Activated CD4-positive, alpha-beta T cell treated with anti-CD3 and anti-CD28 coated beads for 36 hours (primary cell): ENCODE measurements at regions of chr11 and their contacts with region 1.

Region 1: GRCh38 chr11:113773416-113774173 is at the start of gene ZW10:
- DNase-seq: peak; percentile 96
- ATAC-seq: peak; percentile 99
- H3K4me3 Mint-ChIP-seq: peak within 1 kb of the TSS; percentile 98
- H3K27ac Mint-ChIP-seq: peak within 1 kb of the TSS; percentile 96
- H3K4me1 Mint-ChIP-seq: peaks cover 18% of the 10 kb centered on the region
- H3K27me3 Mint-ChIP-seq: no peaks in the 10 kb centered on the region
- total RNA-seq, gene ZW10: 16.9 to 18.5 TPM

Region 2: DNA sequence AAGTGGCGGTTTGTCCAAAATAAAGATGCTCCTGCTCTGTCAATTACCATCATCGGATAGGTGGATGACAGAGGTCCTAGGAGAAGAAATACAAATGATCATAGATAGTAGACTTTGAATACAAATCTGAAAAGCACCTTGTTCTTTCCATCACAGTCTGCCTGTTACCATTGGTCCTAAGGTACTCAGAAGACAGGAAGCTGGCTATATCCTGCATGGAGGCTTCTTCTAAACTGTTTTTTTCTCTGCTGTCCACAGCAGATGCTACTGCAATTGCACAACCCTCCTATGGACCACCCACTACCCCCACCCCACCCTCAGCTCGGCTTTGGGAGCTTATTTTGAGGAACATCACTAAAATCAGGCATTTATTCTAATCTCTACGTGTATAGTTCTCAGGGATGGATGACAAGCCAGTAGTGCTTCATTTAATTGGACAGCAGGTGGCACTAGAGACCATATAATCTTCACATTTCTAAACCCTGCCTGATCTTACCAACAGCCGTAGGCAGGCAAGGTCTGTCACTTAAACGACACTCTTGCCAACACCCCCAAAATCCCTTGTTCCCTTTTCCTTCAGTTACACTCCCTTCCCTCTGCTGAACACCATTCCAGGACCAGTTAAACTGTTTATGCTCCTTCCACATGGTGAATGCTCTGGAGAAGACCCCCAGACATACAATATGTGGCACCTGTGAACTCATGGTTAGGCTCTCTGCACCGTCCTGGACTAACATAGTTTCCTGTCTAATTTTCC is 1553.9 kb before region 1 on chr11:
- CTCF ChIA-PET with region 1: no interaction called
- POLR2A ChIA-PET with region 1: no interaction called
- intact Hi-C with region 1: loop called in 1 of 2 experiments (anchors 10 kb)
- DNase-seq: peak; percentile 45
- ATAC-seq: peak; percentile 99
- H3K4me3 Mint-ChIP-seq: no peak overlapping the region
- H3K27ac Mint-ChIP-seq: no peak overlapping the region
- H3K4me1 Mint-ChIP-seq: no peaks in the 10 kb centered on the region
- H3K27me3 Mint-ChIP-seq: no peaks in the 10 kb centered on the region

Region 3: DNA sequence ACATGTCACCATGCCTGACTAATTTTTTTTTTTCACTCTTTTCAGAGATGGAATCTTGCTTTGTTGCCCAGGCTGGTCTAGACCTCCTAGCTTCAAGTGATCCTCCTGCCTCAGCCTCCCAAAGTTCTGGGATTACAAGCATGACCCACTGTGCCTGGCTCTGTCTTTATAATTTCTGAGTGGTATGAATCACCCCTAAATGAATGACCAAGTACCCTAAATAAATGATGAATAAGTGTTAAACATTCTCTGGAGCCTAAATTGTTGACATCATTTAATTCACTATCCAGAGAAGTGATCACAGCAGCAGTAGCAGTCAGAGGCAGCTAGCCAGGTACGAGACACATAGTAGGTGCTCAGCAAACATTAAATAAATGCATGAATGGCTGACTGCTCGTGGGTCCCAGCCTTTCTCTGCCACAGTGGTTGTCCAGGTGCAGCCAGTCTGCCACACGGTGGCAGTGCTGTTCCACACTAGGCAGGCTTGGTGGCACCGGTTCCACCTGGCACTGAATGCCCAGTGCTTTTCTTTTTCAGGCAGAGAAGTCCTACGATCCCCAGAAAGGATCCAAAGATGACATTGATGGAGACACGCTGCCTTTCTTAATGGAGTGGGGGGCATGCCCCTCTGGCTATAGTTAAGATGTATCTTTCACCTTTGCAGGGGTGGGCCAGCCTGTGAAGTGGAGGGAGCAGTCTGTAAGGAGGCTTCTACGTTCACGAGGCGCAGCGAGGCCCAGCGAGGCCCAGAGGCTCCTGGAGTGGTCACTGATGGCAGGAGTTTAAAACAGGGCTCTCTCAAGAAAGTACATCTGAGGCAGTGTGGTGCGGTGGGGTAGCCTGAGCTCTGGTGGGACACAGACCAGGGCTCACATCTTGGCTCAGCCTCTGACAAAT is 467.9 kb before region 1 on chr11:
- CTCF ChIA-PET with region 1: no interaction called
- POLR2A ChIA-PET with region 1: no interaction called
- intact Hi-C with region 1: loop called in 1 of 2 experiments (anchors 2 kb)
- DNase-seq: peak; percentile 85
- ATAC-seq: peak; percentile 99
- H3K4me3 Mint-ChIP-seq: no peak overlapping the region
- H3K27ac Mint-ChIP-seq: no peak overlapping the region
- H3K4me1 Mint-ChIP-seq: peaks cover 3% of the 10 kb centered on the region
- H3K27me3 Mint-ChIP-seq: peaks cover 6% of the 10 kb centered on the region

Region 4: DNA sequence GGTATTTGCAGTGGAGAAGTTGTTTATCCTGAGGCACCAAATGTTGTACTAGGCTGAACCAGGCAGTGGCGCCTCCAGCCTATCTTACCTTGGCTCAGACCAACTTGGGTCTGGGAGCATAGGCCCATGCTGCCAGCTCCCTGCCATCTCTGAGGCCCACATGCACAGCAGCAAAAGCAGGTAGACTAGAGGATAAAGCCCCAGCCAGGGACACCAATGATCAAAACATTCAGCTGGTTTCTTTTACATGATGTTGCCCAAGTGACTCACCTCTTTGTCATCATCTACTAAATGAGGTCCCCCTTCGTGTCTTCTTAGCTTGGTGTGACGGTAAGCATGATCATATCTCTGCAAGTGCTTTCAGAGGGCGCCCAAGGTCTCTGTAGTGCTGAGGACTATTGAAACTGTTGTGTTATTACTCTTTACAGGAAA is 186.3 kb before region 1 on chr11:
- CTCF ChIA-PET with region 1: no interaction called
- POLR2A ChIA-PET with region 1: no interaction called
- intact Hi-C with region 1: loop called in 1 of 2 experiments (anchors 2 kb)
- DNase-seq: peak; percentile 76
- ATAC-seq: peak; percentile 99
- H3K4me3 Mint-ChIP-seq: no peak overlapping the region
- H3K27ac Mint-ChIP-seq: peak overlapping the region; percentile 82
- H3K4me1 Mint-ChIP-seq: peaks cover 15% of the 10 kb centered on the region
- H3K27me3 Mint-ChIP-seq: peaks cover 8% of the 10 kb centered on the region

Region 5: GRCh38 chr11:113906038-113906437 is 132.4 kb after region 1 on chr11:
- CTCF ChIA-PET with region 1: no interaction called
- POLR2A ChIA-PET with region 1: no interaction called
- intact Hi-C with region 1: no loop called
- DNase-seq: no peak
- ATAC-seq: no peak
- H3K4me3 Mint-ChIP-seq: no peak overlapping the region
- H3K27ac Mint-ChIP-seq: no peak overlapping the region
- H3K4me1 Mint-ChIP-seq: no peaks in the 10 kb centered on the region
- H3K27me3 Mint-ChIP-seq: peaks cover 3% of the 10 kb centered on the region

Region 6: GRCh38 chr11:114400217-114400914 is 626.8 kb after region 1 on chr11 and contains the starts of genes C11orf71 and RBM7:
- CTCF ChIA-PET with region 1: no interaction called
- POLR2A ChIA-PET with region 1: no interaction called
- intact Hi-C with region 1: loop called in 1 of 2 experiments (anchors 1 kb)
- DNase-seq: peak; percentile 99
- ATAC-seq: peak; percentile 95
- H3K4me3 Mint-ChIP-seq: peak within 1 kb of the TSS; percentile 98
- H3K27ac Mint-ChIP-seq: peak within 1 kb of the TSS; percentile 99
- H3K4me1 Mint-ChIP-seq: peaks cover 49% of the 10 kb centered on the region
- H3K27me3 Mint-ChIP-seq: no peaks in the 10 kb centered on the region
- total RNA-seq, gene C11orf71: 4.8 to 5.5 TPM
- total RNA-seq, gene RBM7: 46.7 to 72.3 TPM